ENCODE measurements at regions of chr17 and their contacts with region 1.

Region 1: DNA sequence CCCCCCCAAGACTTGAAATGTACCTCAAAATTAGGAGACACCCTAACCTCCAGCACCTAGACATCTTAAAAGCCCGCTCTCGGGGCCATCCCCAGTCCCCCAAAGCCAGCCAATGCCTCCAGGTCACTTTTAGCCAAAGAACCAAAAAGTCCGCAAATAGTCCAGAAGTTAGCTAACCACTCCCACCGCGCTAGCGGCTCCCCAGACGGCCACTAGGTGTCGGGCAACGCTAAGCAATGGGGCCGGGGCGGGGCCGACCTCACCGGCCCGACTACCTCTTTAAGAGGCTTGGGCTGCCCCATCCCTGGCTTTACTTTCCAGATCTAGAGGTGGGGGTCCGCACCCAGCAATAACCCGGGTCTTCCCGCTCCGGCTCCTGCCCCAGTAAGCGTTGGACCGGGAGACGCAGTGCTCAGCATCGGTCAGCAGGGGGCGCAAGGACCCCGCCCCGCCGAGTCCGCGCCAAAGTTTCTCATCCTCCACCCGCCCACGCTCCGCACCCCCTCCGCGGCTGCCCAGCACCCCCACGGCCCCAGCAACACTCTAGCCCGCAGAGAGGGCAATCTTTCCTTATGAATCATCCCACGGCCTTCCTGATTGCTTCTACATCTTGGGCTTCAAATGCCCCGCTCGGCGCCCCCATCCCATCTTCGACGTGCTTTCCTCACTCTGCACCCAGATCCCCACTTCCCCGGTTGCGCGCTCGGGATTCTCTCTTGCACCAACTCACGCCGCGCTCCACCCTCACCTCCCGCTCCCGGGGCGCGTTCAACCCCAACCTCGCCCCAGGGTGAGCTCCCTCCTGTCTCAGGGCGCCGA is 765 bp downstream of the COL1A1 start:
- DNase-seq: peak; percentile 90
- ATAC-seq: peak; percentile 79
- H3K4me3 ChIP-seq: peak overlapping the region; percentile 15 to 59 (median 48)
- H3K4me3 Mint-ChIP-seq: peak overlapping the region; percentile 85
- H3K27ac ChIP-seq: no peak overlapping the region
- H3K27ac Mint-ChIP-seq: peak overlapping the region; percentile 21
- H3K4me1 ChIP-seq: peaks cover 18 to 23% of the 10 kb centered on the region in 2 donors
- H3K4me1 Mint-ChIP-seq: peaks cover 27% of the 10 kb centered on the region
- H3K27me3 ChIP-seq: peaks cover 0 to 49% (median 11%) of the 10 kb centered on the region in 4 experiments
- H3K27me3 Mint-ChIP-seq: peaks cover 50% of the 10 kb centered on the region
- CTCF ChIP-seq: peak; percentile 100

Region 2: DNA sequence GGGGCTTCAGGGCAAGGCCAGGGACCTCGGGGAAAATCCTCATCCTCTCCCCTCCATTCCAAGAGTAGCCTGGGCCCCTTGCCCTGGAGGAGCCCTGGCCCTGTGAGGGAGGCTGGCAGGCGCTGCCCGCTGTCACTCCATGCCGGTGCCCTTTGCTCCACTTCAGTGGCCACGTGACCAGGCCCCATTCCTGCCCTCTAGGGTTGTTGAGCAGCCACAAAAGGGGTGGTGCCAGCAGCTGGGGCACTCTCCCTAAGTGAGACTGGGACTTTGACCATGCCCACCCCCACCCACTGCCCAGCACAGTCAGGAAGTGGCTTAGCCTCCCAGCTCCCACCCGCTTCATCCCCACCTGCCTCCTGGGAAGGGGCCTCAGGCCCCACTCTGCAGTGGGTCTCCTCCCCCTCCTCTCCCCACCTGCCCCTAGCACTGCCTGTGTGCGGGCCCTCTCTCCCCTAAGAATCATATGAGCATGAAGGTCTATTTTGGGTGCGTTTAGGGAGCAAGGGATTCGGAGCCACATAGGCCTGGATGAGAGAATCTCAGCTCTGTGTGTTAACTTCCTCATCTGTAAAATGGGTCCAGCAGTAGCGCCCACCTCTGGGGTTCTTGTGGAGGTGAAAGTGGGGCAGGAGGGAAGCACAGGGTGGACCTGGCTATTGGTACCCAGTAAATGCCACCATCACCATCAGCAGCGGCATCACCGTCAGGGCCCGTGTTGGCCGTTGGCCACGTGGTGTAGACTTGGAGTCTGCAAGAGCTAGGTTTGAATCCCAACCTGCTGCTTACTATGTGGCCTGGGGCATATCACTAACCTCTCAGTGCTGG is 98.3 kb before region 1 on chr17:
- CTCF ChIA-PET with region 1: no interaction called
- POLR2A ChIA-PET with region 1: no interaction called
- intact Hi-C with region 1: no loop called
- DNase-seq: no peak
- ATAC-seq: no peak
- H3K4me3 ChIP-seq: no peak overlapping the region
- H3K4me3 Mint-ChIP-seq: no peak overlapping the region
- H3K27ac ChIP-seq: no peak overlapping the region
- H3K27ac Mint-ChIP-seq: no peak overlapping the region
- H3K4me1 ChIP-seq: no peaks in the 10 kb centered on the region
- H3K4me1 Mint-ChIP-seq: peaks cover 2% of the 10 kb centered on the region
- H3K27me3 ChIP-seq: no peaks in the 10 kb centered on the region
- H3K27me3 Mint-ChIP-seq: no peaks in the 10 kb centered on the region
- CTCF ChIP-seq: no peak

Region 3: DNA sequence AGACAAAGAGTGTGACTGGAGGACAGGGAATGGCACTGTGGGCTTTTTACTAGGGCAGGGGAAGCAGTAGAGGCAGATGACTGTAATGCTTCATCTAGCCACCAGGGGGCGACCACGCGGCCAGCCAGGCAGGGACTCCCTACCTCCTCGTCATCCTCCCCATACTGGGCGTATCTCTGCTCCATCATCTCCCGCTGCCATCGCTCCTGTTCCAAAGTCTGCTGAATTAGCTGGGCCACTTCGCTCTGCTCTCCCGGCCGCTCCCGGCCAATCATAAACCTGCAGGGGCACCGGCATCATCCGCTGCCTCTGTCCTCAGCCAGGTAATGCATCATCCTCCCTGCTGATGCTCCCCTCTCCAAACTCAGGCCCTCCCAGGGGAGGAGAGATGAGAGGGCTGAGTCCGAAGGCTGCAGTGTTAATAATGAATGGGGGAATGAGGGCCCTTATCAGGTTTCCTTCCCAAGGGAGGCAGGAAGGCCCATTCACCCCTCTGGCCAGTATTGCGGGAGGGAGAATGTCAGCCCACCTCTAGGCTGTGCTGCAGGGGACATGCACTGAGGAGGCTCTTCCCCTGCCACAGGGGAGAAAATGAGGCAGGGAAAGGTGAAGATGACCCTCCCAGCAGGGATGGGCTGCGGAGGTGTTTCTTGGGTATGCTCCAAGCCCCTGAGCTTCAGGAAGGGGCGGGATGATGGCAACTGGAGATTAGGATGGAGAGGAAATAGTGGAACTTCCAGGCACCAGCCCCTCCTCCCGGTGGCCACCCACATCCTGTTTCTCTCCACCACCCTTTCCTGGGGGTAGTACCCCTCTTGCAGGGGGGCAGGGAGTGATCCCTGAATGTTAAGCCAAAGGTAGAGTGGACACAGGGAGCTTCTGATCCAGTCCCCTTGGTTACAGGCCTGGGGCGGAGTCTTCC is 60.5 kb before region 1 on chr17:
- CTCF ChIA-PET with region 1: interaction called, 10 read pairs
- POLR2A ChIA-PET with region 1: no interaction called
- intact Hi-C with region 1: loop called (anchors 2 kb)
- DNase-seq: peak; percentile 85
- ATAC-seq: peak; percentile 83
- H3K4me3 ChIP-seq: no peak overlapping the region
- H3K4me3 Mint-ChIP-seq: peak overlapping the region; percentile 64
- H3K27ac ChIP-seq: peak overlapping the region in 1 of 2 donors; percentile 48
- H3K27ac Mint-ChIP-seq: peak overlapping the region; percentile 81
- H3K4me1 ChIP-seq: peaks cover 51 to 60% of the 10 kb centered on the region in 2 donors
- H3K4me1 Mint-ChIP-seq: peaks cover 61% of the 10 kb centered on the region
- H3K27me3 ChIP-seq: no peaks in the 10 kb centered on the region
- H3K27me3 Mint-ChIP-seq: no peaks in the 10 kb centered on the region
- CTCF ChIP-seq: peak; percentile 92

Region 4: GRCh38 chr17:50169121-50169764 is 31.4 kb before region 1 on chr17:
- CTCF ChIA-PET with region 1: interaction called, 49 read pairs
- POLR2A ChIA-PET with region 1: interaction called, 10 read pairs
- intact Hi-C with region 1: loop called (anchors 1 kb)
- DNase-seq: peak; percentile 91
- ATAC-seq: peak; percentile 84
- H3K4me3 ChIP-seq: peak overlapping the region in 4 of 5 experiments; percentile 12 to 44 (median 29)
- H3K4me3 Mint-ChIP-seq: peak overlapping the region; percentile 64
- H3K27ac ChIP-seq: no peak overlapping the region
- H3K27ac Mint-ChIP-seq: peak overlapping the region; percentile 74
- H3K4me1 ChIP-seq: peaks cover 16 to 27% of the 10 kb centered on the region in 2 donors
- H3K4me1 Mint-ChIP-seq: peaks cover 13% of the 10 kb centered on the region
- H3K27me3 ChIP-seq: no peaks in the 10 kb centered on the region
- H3K27me3 Mint-ChIP-seq: no peaks in the 10 kb centered on the region
- CTCF ChIP-seq: peak; percentile 66

Region 5: GRCh38 chr17:50213026-50214022 is 12.7 kb after region 1 on chr17:
- CTCF ChIA-PET with region 1: interaction called, 65 read pairs
- POLR2A ChIA-PET with region 1: interaction called, 11 read pairs
- intact Hi-C with region 1: no loop called
- DNase-seq: peak; percentile 64
- ATAC-seq: peak; percentile 84
- H3K4me3 ChIP-seq: no peak overlapping the region
- H3K4me3 Mint-ChIP-seq: peak overlapping the region; percentile 8
- H3K27ac ChIP-seq: no peak overlapping the region
- H3K27ac Mint-ChIP-seq: no peak overlapping the region
- H3K4me1 ChIP-seq: peaks cover 8% of the 10 kb centered on the region in 2 donors
- H3K4me1 Mint-ChIP-seq: peaks cover 11% of the 10 kb centered on the region
- H3K27me3 ChIP-seq: peaks cover 0 to 19% (median 7%) of the 10 kb centered on the region in 4 experiments
- H3K27me3 Mint-ChIP-seq: peaks cover 23% of the 10 kb centered on the region
- CTCF ChIP-seq: no peak

Region 6: GRCh38 chr17:50297407-50297865 is 96.8 kb after region 1 on chr17:
- CTCF ChIA-PET with region 1: interaction called, 156 read pairs
- POLR2A ChIA-PET with region 1: no interaction called
- intact Hi-C with region 1: loop called (anchors 1 kb)
- DNase-seq: peak; percentile 81
- ATAC-seq: peak; percentile 99
- H3K4me3 ChIP-seq: no peak overlapping the region
- H3K4me3 Mint-ChIP-seq: no peak overlapping the region
- H3K27ac ChIP-seq: no peak overlapping the region
- H3K27ac Mint-ChIP-seq: peak overlapping the region; percentile 43
- H3K4me1 ChIP-seq: no peaks in the 10 kb centered on the region
- H3K4me1 Mint-ChIP-seq: no peaks in the 10 kb centered on the region
- H3K27me3 ChIP-seq: no peaks in the 10 kb centered on the region
- H3K27me3 Mint-ChIP-seq: peaks cover 20% of the 10 kb centered on the region
- CTCF ChIP-seq: peak; percentile 92